Mammary epithelial cell (primary cell): ENCODE measurements at regions of chr6 and their contacts with region 1.

Region 1: GRCh38 chr6:119934816-119935215 is 585.3 kb upstream of the MAN1A1 start:
- DNase-seq: no peak
- H3K4me3 ChIP-seq: no peak overlapping the region
- H3K27ac ChIP-seq: no peak overlapping the region
- H3K4me1 ChIP-seq: no peaks in the 10 kb centered on the region
- H3K27me3 ChIP-seq: peaks cover 2% of the 10 kb centered on the region
- CTCF ChIP-seq: no peak

Region 2: GRCh38 chr6:119587520-119587919 is 347.3 kb before region 1 on chr6:
- CTCF ChIA-PET with region 1: interaction called, 26 read pairs
- dilution Hi-C with region 1: no loop called
- in situ Hi-C with region 1: no loop called
- intact Hi-C with region 1: no loop called
- DNase-seq: peak; percentile 84
- H3K4me3 ChIP-seq: no peak overlapping the region
- H3K27ac ChIP-seq: no peak overlapping the region
- H3K4me1 ChIP-seq: peaks cover 6% of the 10 kb centered on the region
- H3K27me3 ChIP-seq: no peaks in the 10 kb centered on the region
- CTCF ChIP-seq: no peak